T-cell (primary cell): ENCODE measurements at regions of chr1 and their contacts with region 1.

Region 1: DNA sequence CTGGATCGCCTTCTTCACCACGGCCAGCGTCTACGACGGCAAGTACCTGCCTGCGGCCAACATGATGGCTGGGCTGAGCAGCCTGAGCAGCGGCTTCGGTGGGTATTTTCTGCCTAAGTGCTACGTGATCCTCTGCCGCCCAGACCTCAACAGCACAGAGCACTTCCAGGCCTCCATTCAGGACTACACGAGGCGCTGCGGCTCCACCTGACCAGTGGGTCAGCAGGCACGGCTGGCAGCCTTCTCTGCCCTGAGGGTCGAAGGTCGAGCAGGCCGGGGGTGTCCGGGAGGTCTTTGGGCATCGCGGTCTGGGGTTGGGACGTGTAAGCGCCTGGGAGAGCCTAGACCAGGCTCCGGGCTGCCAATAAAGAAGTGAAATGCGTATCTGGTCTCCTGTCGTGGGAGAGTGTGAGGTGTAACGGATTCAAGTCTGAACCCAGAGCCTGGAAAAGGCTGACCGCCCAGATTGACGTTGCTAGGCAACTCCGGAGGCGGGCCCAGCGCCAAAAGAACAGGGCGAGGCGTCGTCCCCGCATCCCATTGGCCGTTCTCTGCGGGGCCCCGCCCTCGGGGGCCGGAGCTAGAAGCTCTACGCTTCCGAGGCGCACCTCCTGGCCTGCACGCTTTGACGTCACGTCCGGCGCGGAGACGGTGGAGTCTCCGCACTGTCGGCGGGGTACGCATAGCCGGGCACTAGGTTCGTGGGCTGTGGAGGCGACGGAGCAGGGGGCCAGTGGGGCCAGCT is at the start of gene ZBTB48:
- DNase-seq: peak; percentile 90 to 98 (median 96)
- ATAC-seq: peak; percentile 98 to 99 (median 99)
- H3K4me3 ChIP-seq: peak within 1 kb of the TSS; percentile 81 to 85
- H3K4me3 Mint-ChIP-seq: peak within 1 kb of the TSS; percentile 91 to 96 (median 92)
- H3K27ac ChIP-seq: peak within 1 kb of the TSS; percentile 83
- H3K27ac Mint-ChIP-seq: peak within 1 kb of the TSS; percentile 91 to 94
- H3K4me1 ChIP-seq: peaks cover 11 to 41% of the 10 kb centered on the region in 2 experiments
- H3K4me1 Mint-ChIP-seq: peaks cover 35 to 39% (median 36%) of the 10 kb centered on the region in 3 donors
- H3K27me3 ChIP-seq: peaks cover 0 to 5% of the 10 kb centered on the region in 2 experiments
- H3K27me3 Mint-ChIP-seq: no peaks in the 10 kb centered on the region
- total RNA-seq, gene ZBTB48: 42.2 to 82.3 (median 70.3) TPM

Region 2: DNA sequence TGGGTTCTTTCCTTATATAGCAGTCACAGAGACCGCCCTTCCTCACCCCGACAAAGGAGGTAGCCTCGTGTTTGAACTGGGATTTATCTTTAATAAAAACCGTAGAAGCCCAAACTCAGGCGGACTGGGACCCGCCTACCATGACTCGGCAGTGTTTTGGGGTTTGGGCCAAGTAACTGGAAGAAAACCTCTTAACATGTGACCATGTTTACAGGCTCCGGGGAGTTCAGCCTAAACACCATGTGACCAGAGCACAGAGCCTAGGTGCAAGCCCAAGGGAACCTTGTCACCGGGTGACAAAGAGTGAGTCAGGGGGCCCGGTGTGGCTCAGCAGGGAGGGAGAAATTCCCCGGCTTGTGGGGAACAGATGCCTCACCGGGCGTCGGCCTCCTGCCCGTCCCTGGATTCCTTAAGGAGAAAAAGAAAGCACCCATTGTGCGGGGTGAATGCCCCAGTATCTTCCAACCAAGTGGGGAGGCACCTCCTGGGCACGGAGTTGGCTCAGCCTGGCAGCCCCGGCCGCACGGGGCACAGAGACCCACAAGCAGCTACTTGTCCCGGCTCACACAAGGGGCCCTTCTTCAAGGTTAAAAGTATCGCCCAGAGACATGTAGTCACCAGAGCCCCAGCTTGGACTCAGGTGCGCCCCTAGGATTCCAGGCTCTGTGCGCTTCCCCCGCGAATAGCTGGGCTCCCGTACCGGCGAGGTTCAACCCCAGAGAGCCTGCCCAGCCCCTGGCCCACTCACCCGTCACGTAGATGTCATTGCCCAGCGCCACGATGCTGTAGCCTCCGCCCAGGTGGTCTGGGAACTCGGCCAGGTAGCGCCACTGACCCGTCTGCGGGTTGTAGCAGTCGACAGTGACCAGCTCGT is 21.7 kb after region 1 on chr1:
- CTCF ChIA-PET with region 1: interaction called, 3 to 10 read pairs
- POLR2A ChIA-PET with region 1: interaction called in 1 of 2 experiments, 3 read pairs
- DNase-seq: peak in 34 of 35 experiments; percentile 34 to 81 (median 54)
- ATAC-seq: peak; percentile 41 to 50 (median 46)
- H3K4me3 ChIP-seq: peak overlapping the region; percentile 79 to 97
- H3K4me3 Mint-ChIP-seq: peak overlapping the region; percentile 96 to 99 (median 99)
- H3K27ac ChIP-seq: peak overlapping the region; percentile 51
- H3K27ac Mint-ChIP-seq: peak overlapping the region; percentile 98 to 99
- H3K4me1 ChIP-seq: peaks cover 17 to 63% of the 10 kb centered on the region in 2 experiments
- H3K4me1 Mint-ChIP-seq: peaks cover 41 to 55% (median 45%) of the 10 kb centered on the region in 3 donors
- H3K27me3 ChIP-seq: no peaks in the 10 kb centered on the region
- H3K27me3 Mint-ChIP-seq: no peaks in the 10 kb centered on the region